GM12878 (cell line): ENCODE measurements at regions of chr19 and their contacts with region 1.

Region 1: GRCh38 chr19:4844348-4845179 is 13.1 kb upstream of the TICAM1 start:
- DNase-seq: no peak
- ATAC-seq: peak; percentile 60
- H3K4me3 ChIP-seq: no peak overlapping the region
- H3K27ac ChIP-seq: no peak overlapping the region
- H3K4me1 ChIP-seq: peaks cover 27% of the 10 kb centered on the region
- H3K27me3 ChIP-seq: no peaks in the 10 kb centered on the region
- CTCF ChIP-seq: no peak
- EP300 ChIP-seq: no peak
- POLR2A ChIP-seq: no peak
- RAD21 ChIP-seq: no peak

Region 2: DNA sequence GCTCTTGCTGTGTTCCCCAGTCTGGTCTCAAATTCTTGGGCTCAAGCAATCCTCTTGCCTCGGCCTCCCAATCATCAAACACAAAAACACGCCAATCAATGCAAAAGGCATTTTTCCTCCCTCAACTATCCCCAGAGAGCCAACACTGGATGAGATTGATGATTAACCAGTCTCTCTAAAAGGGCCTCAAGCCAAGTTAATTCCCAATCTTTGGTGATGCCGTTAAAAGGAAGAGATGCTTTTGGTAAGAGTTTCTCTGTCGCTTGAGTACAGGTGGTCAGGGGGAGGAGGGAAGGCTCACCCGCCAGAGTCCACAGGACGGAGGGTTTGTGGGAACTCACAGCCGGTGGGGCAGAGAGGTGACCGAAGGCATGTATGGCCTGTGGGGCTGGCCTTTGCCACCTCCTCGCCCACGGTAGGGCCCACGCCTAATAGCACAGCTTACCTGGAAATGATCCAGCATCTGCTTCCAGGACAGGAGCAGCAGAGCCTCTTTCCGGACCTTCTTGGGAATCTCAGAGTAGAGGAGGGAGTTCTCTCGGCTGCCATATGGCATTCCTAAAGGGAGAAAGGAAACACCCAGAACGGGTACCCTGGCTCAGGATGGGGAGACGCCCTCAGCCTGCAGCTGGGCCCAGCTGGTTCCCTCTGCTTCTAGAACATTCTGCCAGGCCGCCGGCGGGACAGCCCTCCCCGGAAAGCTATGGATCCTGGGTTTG is 139.0 kb before region 1 on chr19:
- CTCF ChIA-PET with region 1: no interaction called
- POLR2A ChIA-PET with region 1: no interaction called
- RAD21 ChIA-PET with region 1: no interaction called
- SMC1A ChIA-PET with region 1: no interaction called
- in situ Hi-C with region 1: no loop called
- intact Hi-C with region 1: no loop called
- DNase-seq: no peak
- ATAC-seq: no peak
- H3K4me3 ChIP-seq: no peak overlapping the region
- H3K27ac ChIP-seq: no peak overlapping the region
- H3K4me1 ChIP-seq: peaks cover 12% of the 10 kb centered on the region
- H3K27me3 ChIP-seq: no peaks in the 10 kb centered on the region
- CTCF ChIP-seq: no peak
- EP300 ChIP-seq: no peak
- POLR2A ChIP-seq: no peak
- RAD21 ChIP-seq: no peak

Region 3: DNA sequence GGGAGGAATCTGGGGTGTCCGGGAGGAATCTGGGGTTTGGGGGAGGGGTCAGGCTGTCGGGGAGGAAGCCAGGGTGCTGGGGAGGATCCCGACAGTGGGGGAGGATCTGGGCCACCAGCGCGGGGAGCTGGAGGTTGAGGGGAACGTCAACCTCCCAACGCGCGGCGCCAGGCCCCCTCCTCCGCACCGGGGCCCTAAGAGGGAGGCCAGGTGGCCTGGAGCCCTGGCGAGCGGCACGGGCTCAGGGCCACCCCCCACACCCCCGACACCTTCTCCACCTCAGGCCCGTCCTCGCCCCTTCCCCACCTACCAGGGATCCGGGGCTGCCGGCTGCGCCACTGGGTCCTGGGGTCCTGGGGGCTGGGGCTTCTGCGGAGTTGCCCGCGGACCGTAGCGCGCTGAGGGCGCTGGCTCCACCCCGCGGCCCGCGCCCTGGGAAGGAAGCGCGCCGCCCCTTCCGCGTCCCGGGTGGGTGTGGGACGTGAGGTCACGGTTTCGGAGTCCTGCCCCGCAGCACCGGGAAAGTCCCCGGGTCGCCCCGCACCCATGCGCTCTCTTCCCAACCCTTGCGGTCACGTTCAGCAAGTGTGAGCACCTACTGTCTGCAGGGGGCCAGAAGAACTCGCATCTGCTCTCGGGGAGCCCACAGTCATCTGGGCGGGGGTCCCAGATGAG is 13.1 kb before region 1 on chr19 and contains the start of gene TICAM1:
- CTCF ChIA-PET with region 1: interaction called, 27 read pairs
- POLR2A ChIA-PET with region 1: interaction called, 12 read pairs
- RAD21 ChIA-PET with region 1: interaction called, 22 read pairs
- SMC1A ChIA-PET with region 1: interaction called, 11 read pairs
- in situ Hi-C with region 1: no loop called
- intact Hi-C with region 1: no loop called
- DNase-seq: no peak
- ATAC-seq: peak; percentile 80
- H3K4me3 ChIP-seq: peak within 1 kb of the TSS; percentile 95
- H3K27ac ChIP-seq: peak within 1 kb of the TSS; percentile 92
- H3K4me1 ChIP-seq: no peaks in the 10 kb centered on the region
- H3K27me3 ChIP-seq: no peaks in the 10 kb centered on the region
- CTCF ChIP-seq: no peak
- EP300 ChIP-seq: no peak; a peak in 1 of 4 replicates
- POLR2A ChIP-seq: peak; percentile 86
- RAD21 ChIP-seq: no peak
- polyA plus RNA-seq, gene TICAM1: 0.31 to 0.99 TPM

Region 4: GRCh38 chr19:4889034-4889815 is 44.7 kb after region 1 on chr19:
- CTCF ChIA-PET with region 1: no interaction called
- POLR2A ChIA-PET with region 1: no interaction called
- RAD21 ChIA-PET with region 1: no interaction called
- SMC1A ChIA-PET with region 1: no interaction called
- in situ Hi-C with region 1: no loop called
- intact Hi-C with region 1: no loop called
- DNase-seq: no peak
- ATAC-seq: no peak
- H3K4me3 ChIP-seq: no peak overlapping the region
- H3K27ac ChIP-seq: no peak overlapping the region
- H3K4me1 ChIP-seq: no peaks in the 10 kb centered on the region
- H3K27me3 ChIP-seq: no peaks in the 10 kb centered on the region
- CTCF ChIP-seq: no peak
- EP300 ChIP-seq: no peak
- POLR2A ChIP-seq: no peak
- RAD21 ChIP-seq: no peak

Region 5: DNA sequence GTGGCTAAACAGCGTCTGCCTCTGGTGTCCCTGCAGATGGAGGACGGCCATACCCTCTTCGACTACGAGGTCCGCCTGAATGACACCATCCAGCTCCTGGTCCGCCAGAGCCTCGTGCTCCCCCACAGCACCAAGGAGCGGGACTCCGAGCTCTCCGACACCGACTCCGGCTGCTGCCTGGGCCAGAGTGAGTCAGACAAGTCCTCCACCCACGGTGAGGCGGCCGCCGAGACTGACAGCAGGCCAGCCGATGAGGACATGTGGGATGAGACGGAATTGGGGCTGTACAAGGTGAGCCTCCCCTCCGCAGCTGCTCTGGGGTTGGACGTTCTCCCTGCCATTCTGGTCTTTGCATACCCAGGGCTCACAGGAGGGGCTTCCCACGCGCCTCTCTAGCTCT is 84.6 kb after region 1 on chr19:
- CTCF ChIA-PET with region 1: no interaction called
- POLR2A ChIA-PET with region 1: no interaction called
- RAD21 ChIA-PET with region 1: no interaction called
- SMC1A ChIA-PET with region 1: no interaction called
- in situ Hi-C with region 1: no loop called
- intact Hi-C with region 1: no loop called
- DNase-seq: no peak
- ATAC-seq: no peak
- H3K4me3 ChIP-seq: no peak overlapping the region
- H3K27ac ChIP-seq: no peak overlapping the region
- H3K4me1 ChIP-seq: no peaks in the 10 kb centered on the region
- H3K27me3 ChIP-seq: no peaks in the 10 kb centered on the region
- CTCF ChIP-seq: no peak
- EP300 ChIP-seq: no peak
- POLR2A ChIP-seq: no peak
- RAD21 ChIP-seq: no peak